Dorsolateral prefrontal cortex (tissue), 120 donors: ENCODE measurements at regions of chr4 and their contacts with region 1.

Region 1: GRCh38 chr4:2041234-2042130 is 17.6 kb upstream of the NAT8L start:
- DNase-seq: peak; percentile 78 to 95 (median 86)
- H3K4me3 ChIP-seq: peak overlapping the region; percentile 54 to 97 (median 81)
- H3K27ac ChIP-seq: peak overlapping the region in 55 of 59 donors; percentile 15 to 91 (median 81)
- H3K27me3 ChIP-seq: peaks cover 0 to 6% (median 0%) of the 10 kb centered on the region in 45 donors
- CTCF ChIP-seq: peak in 2 of 56 donors; percentile 7 to 13

Region 2: DNA sequence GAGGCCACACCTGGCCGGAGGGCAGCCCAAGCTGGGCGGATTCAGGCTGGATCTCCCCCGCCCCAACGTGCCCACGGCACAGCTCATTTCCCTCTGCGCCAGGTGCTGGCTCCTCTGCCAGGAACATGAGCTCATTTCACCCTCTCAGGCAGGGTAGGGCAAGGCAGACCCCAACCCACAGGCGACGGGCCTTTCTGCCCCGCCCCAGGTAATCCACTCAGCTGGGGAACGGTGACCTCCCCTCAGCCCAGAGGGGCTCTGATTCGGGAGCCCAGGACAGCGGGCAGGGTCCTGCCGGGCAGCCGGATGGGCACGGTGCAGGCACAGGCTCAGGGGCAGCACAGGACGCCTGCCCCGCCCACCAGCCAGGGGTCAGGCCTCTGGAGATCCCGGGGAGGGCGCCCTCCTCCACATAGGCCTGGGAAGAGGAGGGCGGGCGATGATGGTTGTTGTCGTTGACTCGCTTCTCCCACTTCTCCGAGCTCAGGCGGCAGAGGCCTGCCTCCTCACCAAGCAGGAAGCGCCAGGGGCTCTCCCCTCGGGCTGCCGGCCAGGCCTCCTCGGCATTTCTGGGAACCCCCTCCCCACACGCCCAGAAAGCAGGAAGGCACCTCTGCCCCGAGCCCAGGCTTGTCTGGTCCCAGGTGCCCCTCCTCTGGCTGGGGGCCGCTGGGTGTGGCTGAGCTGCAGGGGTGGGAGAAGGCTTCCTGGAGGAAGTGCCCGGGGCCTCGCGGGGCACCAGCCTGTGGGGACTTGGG is 289.0 kb before region 1 on chr4:
- intact Hi-C with region 1: no loop called
- DNase-seq: no peak
- H3K4me3 ChIP-seq: no peak overlapping the region
- H3K27ac ChIP-seq: no peak overlapping the region
- H3K27me3 ChIP-seq: peaks cover 0 to 3% (median 0%) of the 10 kb centered on the region in 45 donors
- CTCF ChIP-seq: no peak

Region 3: GRCh38 chr4:2154215-2154740 is 112.8 kb after region 1 on chr4:
- intact Hi-C with region 1: no loop called
- DNase-seq: no peak
- H3K4me3 ChIP-seq: no peak overlapping the region
- H3K27ac ChIP-seq: no peak overlapping the region
- H3K27me3 ChIP-seq: no peaks in the 10 kb centered on the region
- CTCF ChIP-seq: no peak

Region 4: GRCh38 chr4:2468445-2469192 is 427.1 kb after region 1 on chr4 and contains the start of gene RNF4:
- intact Hi-C with region 1: loop called in 1 of 2 experiments (anchors 10 kb)
- DNase-seq: peak; percentile 86 to 97 (median 96)
- H3K4me3 ChIP-seq: peak within 1 kb of the TSS; percentile 71 to 100 (median 96)
- H3K27ac ChIP-seq: peak within 1 kb of the TSS; percentile 62 to 99 (median 93)
- H3K27me3 ChIP-seq: no peaks in the 10 kb centered on the region
- CTCF ChIP-seq: peak in 23 of 56 donors; percentile 2 to 56 (median 23)
- total RNA-seq, gene RNF4: 40.7 to 76.3 (median 56.4) TPM